AG04450 (cell line): ENCODE measurements at regions of chr11 and their contacts with region 1.

Region 1: GRCh38 chr11:69675811-69676371 is 738 bp upstream of the LTO1 start:
- DNase-seq: no peak
- H3K4me3 ChIP-seq: no peak overlapping the region
- H3K27ac ChIP-seq: no peak overlapping the region
- H3K27me3 ChIP-seq: no peaks in the 10 kb centered on the region
- CTCF ChIP-seq: no peak

Region 2: DNA sequence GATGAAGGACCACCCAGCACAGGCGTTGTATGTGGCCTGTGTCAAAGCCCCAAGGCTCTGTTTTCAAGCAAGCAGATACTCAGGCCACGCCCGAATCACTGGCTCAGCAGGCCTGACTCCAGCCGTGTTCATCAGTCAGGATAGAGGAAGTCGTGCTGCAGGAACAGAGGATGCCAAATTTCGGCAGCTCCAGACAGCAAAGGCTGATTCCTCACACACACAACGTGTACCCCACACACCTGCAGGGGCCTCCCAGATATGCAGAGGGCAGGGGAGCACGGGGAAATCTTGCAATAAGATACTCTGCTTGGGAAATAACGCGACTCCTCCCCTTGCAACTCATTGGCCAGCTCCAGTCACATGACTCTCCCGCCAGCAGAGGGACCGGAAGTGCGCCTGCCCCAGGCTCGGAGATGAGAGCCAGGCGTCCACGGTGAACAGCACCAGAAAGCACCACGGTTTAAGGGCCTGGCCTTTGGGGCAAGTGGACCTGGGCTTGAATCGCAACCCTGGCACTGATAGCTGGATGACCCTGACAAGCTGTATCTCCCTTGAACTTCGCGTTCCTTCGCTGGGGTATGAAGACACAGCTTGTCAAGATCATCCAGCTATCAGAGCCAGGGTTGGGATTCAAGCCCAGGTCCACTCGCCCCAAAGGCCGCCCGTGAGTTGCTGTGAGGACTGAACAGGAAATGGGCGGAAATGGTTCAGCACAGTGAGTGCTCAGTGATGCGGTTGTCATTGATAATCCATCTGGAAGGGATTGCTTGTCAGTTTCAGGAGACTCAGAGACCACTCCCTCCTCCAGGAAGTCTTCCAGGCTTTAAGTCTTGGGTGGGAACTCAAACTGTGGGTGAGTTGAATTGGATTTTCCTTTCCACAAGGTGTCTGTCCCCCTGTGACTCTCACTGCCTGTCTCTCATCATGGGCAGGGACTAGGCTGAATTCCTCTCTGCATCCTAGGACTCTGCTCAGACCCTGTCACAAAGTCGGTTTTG is 293.5 kb before region 1 on chr11:
- CTCF ChIA-PET with region 1: no interaction called
- POLR2A ChIA-PET with region 1: no interaction called
- DNase-seq: no peak
- H3K4me3 ChIP-seq: no peak overlapping the region
- H3K27ac ChIP-seq: no peak overlapping the region
- H3K27me3 ChIP-seq: no peaks in the 10 kb centered on the region
- CTCF ChIP-seq: no peak

Region 3: GRCh38 chr11:69636312-69637197 is 39.3 kb before region 1 on chr11:
- CTCF ChIA-PET with region 1: no interaction called
- POLR2A ChIA-PET with region 1: no interaction called
- DNase-seq: peak; percentile 86
- H3K4me3 ChIP-seq: peak overlapping the region; percentile 47
- H3K27ac ChIP-seq: peak overlapping the region; percentile 70
- H3K27me3 ChIP-seq: no peaks in the 10 kb centered on the region
- CTCF ChIP-seq: no peak

Region 4: DNA sequence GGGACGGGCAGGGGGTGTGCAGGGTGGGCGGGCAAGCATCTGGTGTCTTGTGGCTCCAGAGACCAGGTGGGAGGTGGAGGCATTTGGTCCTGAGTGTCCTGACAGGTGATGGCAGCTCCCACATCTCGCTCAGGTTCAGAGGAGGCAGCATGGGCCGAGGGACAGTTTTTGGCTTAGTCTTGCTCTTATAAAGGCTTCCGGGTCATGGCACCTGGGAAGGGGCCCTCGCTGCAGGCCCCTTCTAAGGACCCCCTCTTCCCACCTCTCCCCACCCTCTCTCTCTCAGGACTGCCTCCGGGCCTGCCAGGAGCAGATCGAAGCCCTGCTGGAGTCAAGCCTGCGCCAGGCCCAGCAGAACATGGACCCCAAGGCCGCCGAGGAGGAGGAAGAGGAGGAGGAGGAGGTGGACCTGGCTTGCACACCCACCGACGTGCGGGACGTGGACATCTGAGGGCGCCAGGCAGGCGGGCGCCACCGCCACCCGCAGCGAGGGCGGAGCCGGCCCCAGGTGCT is 25.0 kb before region 1 on chr11:
- CTCF ChIA-PET with region 1: no interaction called
- POLR2A ChIA-PET with region 1: no interaction called
- DNase-seq: no peak
- H3K4me3 ChIP-seq: no peak overlapping the region
- H3K27ac ChIP-seq: no peak overlapping the region
- H3K27me3 ChIP-seq: no peaks in the 10 kb centered on the region
- CTCF ChIP-seq: no peak

Region 5: GRCh38 chr11:69832561-69833413 is 156.9 kb after region 1 on chr11:
- CTCF ChIA-PET with region 1: no interaction called
- POLR2A ChIA-PET with region 1: no interaction called
- DNase-seq: no peak
- H3K4me3 ChIP-seq: no peak overlapping the region
- H3K27ac ChIP-seq: no peak overlapping the region
- H3K27me3 ChIP-seq: peaks cover 39% of the 10 kb centered on the region
- CTCF ChIP-seq: no peak

Region 6: DNA sequence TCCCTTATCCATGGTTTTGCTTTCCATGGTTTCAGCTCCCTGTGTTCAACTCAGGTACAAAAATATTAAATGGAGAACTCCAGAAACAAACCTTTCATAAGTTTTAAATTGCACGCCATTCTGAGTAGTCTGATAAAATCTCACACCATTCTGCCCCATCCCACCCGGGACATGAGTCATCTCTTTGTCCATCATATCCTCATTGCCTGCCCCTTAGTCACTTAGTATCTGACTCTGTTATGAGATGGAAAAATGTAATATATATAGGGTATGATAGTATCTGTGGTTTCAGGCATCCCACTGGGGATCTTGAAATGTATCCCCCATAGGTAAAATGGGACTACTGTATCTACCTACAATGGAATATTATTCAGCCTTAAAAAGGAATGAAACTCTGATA is 178.8 kb after region 1 on chr11:
- CTCF ChIA-PET with region 1: interaction called, 12 read pairs
- POLR2A ChIA-PET with region 1: no interaction called
- DNase-seq: no peak
- H3K4me3 ChIP-seq: no peak overlapping the region
- H3K27ac ChIP-seq: no peak overlapping the region
- H3K27me3 ChIP-seq: peaks cover 25% of the 10 kb centered on the region
- CTCF ChIP-seq: no peak